ENCODE measurements at regions of chr11 and their contacts with region 1.

Region 1: GRCh38 chr11:33542921-33543320 is 157.7 kb downstream of the C11orf91 start:
- DNase-seq: peak; percentile 66 to 74
- H3K4me3 ChIP-seq: no peak overlapping the region
- H3K27ac ChIP-seq: no peak overlapping the region
- H3K4me1 ChIP-seq: no peaks in the 10 kb centered on the region
- H3K27me3 ChIP-seq: peaks cover 0 to 19% (median 0%) of the 10 kb centered on the region in 3 donors
- CTCF ChIP-seq: peak in 5 of 7 experiments; percentile 29 to 56 (median 47)
- EP300 ChIP-seq: no peak
- POLR2A ChIP-seq: no peak

Region 2: DNA sequence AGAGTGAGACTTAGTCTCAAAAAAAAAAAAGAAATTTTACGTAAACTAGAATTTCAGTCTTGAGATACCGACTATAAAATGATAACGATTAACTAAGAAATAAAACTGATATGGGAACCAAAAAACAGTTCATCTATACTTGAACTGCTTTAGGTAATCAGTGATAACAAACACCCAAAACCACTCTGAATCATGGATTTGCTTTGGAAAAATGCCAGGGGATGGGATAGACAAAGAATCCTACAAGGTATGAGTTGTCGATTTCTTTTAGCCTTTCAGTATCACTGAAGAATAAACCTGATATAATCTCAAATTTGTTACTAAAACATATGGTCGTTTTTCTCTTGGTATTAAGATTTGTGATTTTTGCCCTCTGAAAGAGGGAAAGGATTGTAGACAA is 395.4 kb before region 1 on chr11:
- intact Hi-C with region 1: no loop called
- DNase-seq: no peak
- H3K4me3 ChIP-seq: no peak overlapping the region
- H3K27ac ChIP-seq: no peak overlapping the region
- H3K4me1 ChIP-seq: peaks cover 0 to 29% (median 12%) of the 10 kb centered on the region in 4 donors
- H3K27me3 ChIP-seq: no peaks in the 10 kb centered on the region
- CTCF ChIP-seq: no peak
- EP300 ChIP-seq: no peak
- POLR2A ChIP-seq: no peak

Region 3: DNA sequence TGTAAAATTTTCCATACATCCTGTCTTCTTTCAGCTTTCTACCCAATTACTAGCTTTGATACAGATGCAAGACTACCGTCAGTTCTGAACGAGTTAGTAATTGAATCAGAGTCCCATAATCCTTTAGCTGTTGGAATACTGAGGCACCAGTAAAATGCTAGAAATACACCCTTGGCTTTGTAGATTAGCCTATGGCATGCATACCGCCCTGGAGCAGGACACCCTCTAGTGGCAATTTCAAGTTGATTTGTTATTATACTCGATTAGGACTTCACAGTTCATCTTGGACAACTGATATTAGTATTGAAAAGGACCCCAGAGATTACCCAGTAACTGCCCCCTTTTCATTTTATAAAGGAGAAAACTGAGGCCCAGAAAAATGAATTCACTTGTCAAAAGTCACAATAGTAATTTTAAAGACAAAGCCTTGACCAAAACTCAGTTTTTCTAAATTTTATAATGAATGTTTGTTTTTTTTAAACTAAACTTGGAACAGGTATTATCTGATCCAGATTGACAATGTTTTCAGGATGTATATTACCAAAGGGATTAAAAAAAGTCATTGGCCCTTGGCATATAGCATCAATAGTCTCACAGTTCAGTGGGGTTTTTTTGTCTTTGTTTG is 213.1 kb before region 1 on chr11:
- intact Hi-C with region 1: no loop called
- DNase-seq: peak; percentile 55 to 88
- H3K4me3 ChIP-seq: no peak overlapping the region
- H3K27ac ChIP-seq: no peak overlapping the region
- H3K4me1 ChIP-seq: peaks cover 9 to 69% (median 38%) of the 10 kb centered on the region in 4 donors
- H3K27me3 ChIP-seq: no peaks in the 10 kb centered on the region
- CTCF ChIP-seq: peak in 5 of 7 experiments; percentile 20 to 65 (median 49)
- EP300 ChIP-seq: no peak
- POLR2A ChIP-seq: no peak

Region 4: GRCh38 chr11:33687733-33688479 is 145.0 kb after region 1 on chr11:
- intact Hi-C with region 1: loop called (anchors 10 kb)
- DNase-seq: peak in 1 of 2 donors; percentile 84
- H3K4me3 ChIP-seq: no peak overlapping the region
- H3K27ac ChIP-seq: no peak overlapping the region
- H3K4me1 ChIP-seq: peaks cover 24 to 41% (median 32%) of the 10 kb centered on the region in 4 donors
- H3K27me3 ChIP-seq: no peaks in the 10 kb centered on the region
- CTCF ChIP-seq: peak in 5 of 7 experiments; percentile 19 to 55 (median 45)
- EP300 ChIP-seq: no peak
- POLR2A ChIP-seq: no peak

Region 5: GRCh38 chr11:33742249-33742851 is 199.4 kb after region 1 on chr11:
- intact Hi-C with region 1: loop called (anchors 10 kb)
- DNase-seq: peak in 1 of 2 donors; percentile 51
- H3K4me3 ChIP-seq: no peak overlapping the region
- H3K27ac ChIP-seq: no peak overlapping the region
- H3K4me1 ChIP-seq: peaks cover 0 to 30% (median 12%) of the 10 kb centered on the region in 4 donors
- H3K27me3 ChIP-seq: no peaks in the 10 kb centered on the region
- CTCF ChIP-seq: peak in 4 of 7 experiments; percentile 26 to 57 (median 43)
- EP300 ChIP-seq: no peak
- POLR2A ChIP-seq: no peak